PC-9 (cell line): ENCODE measurements at regions of chr21 and their contacts with region 1.

Region 1: DNA sequence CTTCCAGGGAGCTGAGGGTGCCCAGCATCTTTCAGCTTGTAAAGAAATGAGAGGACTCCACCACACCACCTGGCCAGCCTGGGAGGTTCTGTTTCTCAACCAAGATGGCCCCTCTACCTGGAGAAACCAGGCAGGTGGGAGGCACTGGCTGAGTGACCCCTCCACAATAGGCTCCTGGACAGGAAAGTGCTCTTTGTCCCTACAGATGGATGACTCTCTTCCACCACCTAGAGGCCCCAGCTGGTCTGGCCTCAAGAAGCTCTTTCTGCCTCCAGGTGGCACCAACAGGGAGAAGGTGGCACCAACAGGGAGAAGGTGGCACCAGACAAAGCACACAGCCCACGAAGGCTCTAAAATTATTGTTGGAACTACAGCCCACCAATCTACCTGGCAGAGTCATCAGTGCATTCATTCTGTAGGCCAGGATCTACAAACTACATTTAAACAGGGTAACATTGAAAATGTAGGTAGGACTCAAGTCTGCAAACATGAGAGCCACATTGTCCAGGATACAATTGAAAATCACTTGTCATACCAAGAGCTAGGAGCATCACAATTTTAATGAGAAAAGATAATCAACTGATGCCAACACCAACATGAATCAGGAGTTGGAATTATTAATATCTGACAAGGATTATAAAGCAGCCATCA is 14.4 kb downstream of the TMPRSS3 start:
- DNase-seq: peak; percentile 47 to 59
- H3K4me3 ChIP-seq: no peak overlapping the region
- H3K27ac ChIP-seq: no peak overlapping the region
- H3K4me1 ChIP-seq: no peaks in the 10 kb centered on the region
- H3K27me3 ChIP-seq: no peaks in the 10 kb centered on the region
- CTCF ChIP-seq: peak; percentile 81

Region 2: DNA sequence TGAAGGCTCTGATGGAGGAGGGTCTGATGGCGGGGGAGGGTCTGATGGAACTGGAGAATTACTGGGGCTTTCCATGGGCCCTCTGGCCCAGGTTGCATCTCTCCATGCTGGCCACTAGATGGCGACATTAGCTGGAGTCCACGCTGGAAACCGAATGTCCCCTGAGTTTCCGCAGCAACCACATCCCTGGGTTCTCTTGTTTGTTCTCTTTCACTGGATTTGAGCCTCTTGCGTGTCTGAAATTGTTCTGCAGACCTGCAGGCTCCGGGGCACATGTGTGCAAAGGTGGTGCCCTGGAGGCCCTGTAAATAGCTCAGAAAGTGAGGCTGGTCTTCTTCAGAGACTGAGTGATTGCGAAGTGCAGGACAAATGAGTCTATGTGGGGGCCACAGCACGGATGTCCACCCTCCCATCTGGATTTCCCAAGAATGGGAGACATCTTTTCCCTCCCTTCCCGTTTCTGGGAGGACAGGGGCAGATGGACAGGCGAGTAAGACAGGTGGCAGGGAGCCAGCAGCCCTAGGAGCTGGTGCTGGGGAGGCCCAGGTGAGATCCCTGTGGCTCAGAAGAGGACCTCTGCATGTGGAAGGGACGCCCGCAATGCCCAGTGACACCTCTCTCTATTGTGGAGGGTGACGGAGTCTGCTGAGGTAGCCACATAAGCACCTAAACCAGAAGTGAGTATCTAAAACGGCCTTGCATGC is 235.7 kb before region 1 on chr21:
- CTCF ChIA-PET with region 1: no interaction called
- POLR2A ChIA-PET with region 1: no interaction called
- intact Hi-C with region 1: loop called (anchors 1 kb)
- DNase-seq: peak in 1 of 2 experiments; percentile 44
- H3K4me3 ChIP-seq: no peak overlapping the region
- H3K27ac ChIP-seq: no peak overlapping the region
- H3K4me1 ChIP-seq: no peaks in the 10 kb centered on the region
- H3K27me3 ChIP-seq: no peaks in the 10 kb centered on the region
- CTCF ChIP-seq: peak; percentile 84

Region 3: DNA sequence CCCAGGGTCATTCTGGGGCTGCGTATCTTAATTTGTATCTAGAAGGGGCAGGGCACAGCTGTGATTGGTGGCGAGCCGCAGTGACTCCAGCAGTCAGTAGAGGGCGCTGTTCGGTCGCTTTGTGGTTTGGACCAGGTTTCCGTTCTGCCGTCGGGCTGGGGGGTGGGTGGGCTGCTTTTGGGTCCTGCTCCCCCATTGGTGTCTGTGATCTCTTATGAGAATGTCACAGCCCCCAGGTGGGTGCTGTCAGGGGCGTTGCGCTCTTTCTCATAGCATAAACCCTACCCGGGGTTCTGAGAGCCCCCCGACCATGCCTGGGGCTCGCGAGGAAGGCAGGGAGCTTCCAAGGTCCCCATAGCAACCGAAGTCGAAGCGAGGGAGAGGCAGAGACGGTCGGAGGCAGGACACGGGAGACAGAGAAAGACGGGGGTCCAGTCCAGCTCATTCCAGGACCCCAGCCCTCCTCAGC is 71.7 kb before region 1 on chr21:
- CTCF ChIA-PET with region 1: no interaction called
- POLR2A ChIA-PET with region 1: no interaction called
- intact Hi-C with region 1: loop called (anchors 2 kb)
- DNase-seq: peak in 1 of 2 experiments; percentile 31
- H3K4me3 ChIP-seq: no peak overlapping the region
- H3K27ac ChIP-seq: no peak overlapping the region
- H3K4me1 ChIP-seq: no peaks in the 10 kb centered on the region
- H3K27me3 ChIP-seq: no peaks in the 10 kb centered on the region
- CTCF ChIP-seq: peak; percentile 74

Region 4: DNA sequence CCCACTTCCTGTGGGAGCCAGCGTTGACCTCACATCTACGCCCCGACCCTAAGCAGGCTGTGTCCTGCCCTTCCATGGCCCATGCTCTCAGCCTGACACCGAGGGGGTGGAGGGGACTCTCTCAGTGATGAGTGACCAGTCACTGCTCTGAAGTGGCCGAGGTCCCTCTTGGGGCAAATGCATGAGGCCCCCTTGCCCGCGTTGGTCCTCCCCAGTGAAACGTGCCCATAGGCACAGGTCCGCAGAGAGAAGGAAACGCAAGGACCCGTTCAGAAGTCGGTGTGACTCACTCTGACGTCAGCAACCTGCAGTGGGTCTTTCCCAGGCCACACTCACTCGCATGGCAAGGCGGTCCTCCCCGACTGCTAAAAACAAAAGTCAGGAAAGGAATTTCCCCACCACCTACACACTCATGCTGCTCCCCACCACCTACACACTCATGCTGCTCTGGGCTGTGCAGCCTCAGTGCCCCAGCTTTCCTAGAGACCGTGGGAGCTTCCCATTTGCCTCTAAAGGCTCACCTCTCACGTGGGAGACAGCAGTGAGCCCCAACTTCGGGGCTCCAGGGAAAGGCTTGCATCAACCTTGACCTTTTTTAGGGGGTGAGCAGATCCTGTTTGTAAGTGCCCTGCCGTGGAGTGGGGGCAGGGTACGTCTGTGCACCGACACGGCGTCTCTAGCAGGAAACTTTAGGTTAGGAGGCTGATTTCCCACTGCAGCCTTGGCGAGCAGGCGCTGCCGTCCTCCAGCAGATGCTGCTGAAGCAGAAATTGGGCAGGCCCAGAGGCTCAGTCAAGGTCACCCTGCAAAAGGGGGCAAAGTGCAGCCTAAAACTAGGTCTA is 33.7 kb after region 1 on chr21:
- CTCF ChIA-PET with region 1: no interaction called
- POLR2A ChIA-PET with region 1: no interaction called
- intact Hi-C with region 1: no loop called
- DNase-seq: peak; percentile 56 to 65
- H3K4me3 ChIP-seq: no peak overlapping the region
- H3K27ac ChIP-seq: no peak overlapping the region
- H3K4me1 ChIP-seq: 0 out of 2 replicates have a peak, but pooled peaks cover 9% of the 10 kb centered on the region
- H3K27me3 ChIP-seq: no peaks in the 10 kb centered on the region
- CTCF ChIP-seq: no peak

Region 5: GRCh38 chr21:42454786-42455580 is 73.5 kb after region 1 on chr21:
- CTCF ChIA-PET with region 1: no interaction called
- POLR2A ChIA-PET with region 1: no interaction called
- intact Hi-C with region 1: loop called (anchors 1 kb)
- DNase-seq: no peak
- H3K4me3 ChIP-seq: no peak overlapping the region
- H3K27ac ChIP-seq: no peak overlapping the region
- H3K4me1 ChIP-seq: no peaks in the 10 kb centered on the region
- H3K27me3 ChIP-seq: no peaks in the 10 kb centered on the region
- CTCF ChIP-seq: no peak

Region 6: GRCh38 chr21:42537106-42537742 is 155.8 kb after region 1 on chr21:
- CTCF ChIA-PET with region 1: no interaction called
- POLR2A ChIA-PET with region 1: no interaction called
- intact Hi-C with region 1: loop called (anchors 1 kb)
- DNase-seq: no peak
- H3K4me3 ChIP-seq: no peak overlapping the region
- H3K27ac ChIP-seq: no peak overlapping the region
- H3K4me1 ChIP-seq: no peaks in the 10 kb centered on the region
- H3K27me3 ChIP-seq: no peaks in the 10 kb centered on the region
- CTCF ChIP-seq: peak; percentile 30; the same call in 1 of the 2 replicates